Spleen (tissue), 13 donors: ENCODE measurements at regions of chr16 and their contacts with region 1.

Region 1: DNA sequence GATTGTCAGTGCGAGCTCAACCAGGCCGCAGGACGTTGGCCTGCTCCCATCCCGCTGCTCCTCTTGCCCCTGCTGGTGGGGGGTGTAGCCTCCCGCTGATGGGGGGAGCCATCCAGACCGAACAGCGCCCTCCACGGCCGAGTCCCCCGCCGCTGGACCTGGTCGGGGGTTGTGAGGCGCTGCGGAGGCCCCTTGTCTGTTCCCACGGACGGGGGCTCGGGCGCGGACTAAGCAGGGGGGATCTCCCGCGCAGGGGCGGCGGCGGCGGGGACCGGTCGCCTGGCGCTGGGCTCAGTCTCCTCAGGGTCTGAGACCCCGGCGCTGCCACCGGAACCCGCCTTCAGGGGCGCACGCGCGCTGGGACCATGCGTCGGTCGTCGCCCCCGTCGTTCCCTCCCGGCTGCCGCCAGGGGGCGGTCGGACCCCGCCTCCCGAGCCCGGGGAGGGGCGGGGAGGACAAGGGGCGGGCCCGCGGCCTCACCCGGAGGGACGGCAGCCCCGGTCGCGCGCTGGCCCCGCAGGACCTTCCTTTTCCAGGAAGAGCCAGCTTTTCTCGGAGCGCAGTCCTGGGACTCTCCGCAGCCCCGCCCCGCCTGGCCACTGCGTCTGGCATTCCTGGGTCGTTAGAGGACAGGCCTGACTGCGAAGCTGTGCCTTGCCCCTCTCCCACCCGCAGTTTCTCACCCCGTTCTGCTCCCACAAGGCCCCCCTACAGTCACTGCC is 6.3 kb upstream of the IL32 start:
- DNase-seq: peak; percentile 98
- H3K4me3 ChIP-seq: peak overlapping the region; percentile 71 to 97 (median 80)
- H3K27ac ChIP-seq: peak overlapping the region; percentile 86 to 96 (median 90)
- H3K4me1 ChIP-seq: peaks cover 21 to 98% (median 63%) of the 10 kb centered on the region in 6 donors
- H3K27me3 ChIP-seq: no peaks in the 10 kb centered on the region
- CTCF ChIP-seq: peak; percentile 83 to 99 (median 97)
- POLR2A ChIP-seq: peak in 1 of 3 donors; percentile 17

Region 2: GRCh38 chr16:2799866-2800239 is 259.3 kb before region 1 on chr16:
- intact Hi-C with region 1: no loop called
- DNase-seq: peak; percentile 11
- H3K4me3 ChIP-seq: no peak overlapping the region
- H3K27ac ChIP-seq: no peak overlapping the region
- H3K4me1 ChIP-seq: peaks cover 0 to under 1% (median 0%) of the 10 kb centered on the region in 6 donors
- H3K27me3 ChIP-seq: peaks cover 0 to 46% (median 9%) of the 10 kb centered on the region in 7 donors
- CTCF ChIP-seq: no peak
- POLR2A ChIP-seq: no peak

Region 3: DNA sequence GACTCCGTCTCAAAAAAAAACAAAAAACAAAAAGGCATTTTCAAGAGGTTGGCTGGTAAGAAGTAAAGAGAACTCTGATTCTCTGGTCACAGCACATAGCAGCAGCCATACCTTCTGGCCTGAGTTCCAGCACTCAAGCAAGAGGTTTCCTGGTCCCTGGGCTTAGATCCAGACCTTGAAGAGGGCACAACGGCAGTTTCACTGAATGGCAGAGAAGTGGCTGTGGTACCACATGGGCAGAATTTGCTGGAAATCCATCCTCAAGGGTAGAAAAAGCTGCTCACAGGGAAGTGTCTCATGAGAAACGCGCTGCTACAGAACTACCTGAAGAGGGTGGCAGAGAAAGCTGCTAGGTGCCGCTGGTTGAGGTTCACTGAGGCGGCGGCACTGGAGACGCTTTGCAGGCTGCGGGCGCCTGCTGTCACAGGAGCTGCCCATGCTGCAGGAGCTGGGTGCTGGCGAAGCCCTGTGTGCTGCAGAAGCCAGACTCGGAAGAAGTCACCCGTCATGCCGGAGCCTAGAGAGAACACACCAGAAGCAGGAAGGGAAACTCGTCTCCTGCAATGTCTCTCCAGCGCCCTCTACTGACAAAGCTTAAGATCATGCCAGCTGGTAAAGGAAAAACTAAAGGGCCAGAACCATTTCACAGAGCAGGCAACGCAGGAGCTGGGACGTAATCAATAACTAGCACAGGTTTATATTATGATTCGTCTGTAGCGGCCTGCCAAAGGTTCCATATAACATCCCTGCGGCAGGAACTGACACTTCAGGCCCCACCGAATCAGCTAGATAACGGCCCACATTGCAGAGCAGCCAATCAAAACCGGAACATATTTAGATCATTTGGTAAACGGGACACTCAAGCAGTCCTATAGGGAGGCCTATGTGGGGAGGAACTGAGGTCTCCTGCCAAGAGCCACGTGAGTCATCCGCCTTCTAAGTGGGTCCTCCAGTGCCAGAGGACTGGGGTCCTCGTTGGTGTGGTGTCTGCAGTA is 70.3 kb after region 1 on chr16:
- intact Hi-C with region 1: loop called (anchors 5 kb)
- DNase-seq: peak; percentile 91
- H3K4me3 ChIP-seq: peak overlapping the region; percentile 40 to 73 (median 49)
- H3K27ac ChIP-seq: peak overlapping the region; percentile 68 to 90 (median 80)
- H3K4me1 ChIP-seq: peaks cover 30 to 96% (median 60%) of the 10 kb centered on the region in 6 donors
- H3K27me3 ChIP-seq: no peaks in the 10 kb centered on the region
- CTCF ChIP-seq: peak; percentile 72 to 95 (median 90)
- POLR2A ChIP-seq: no peak

Region 4: DNA sequence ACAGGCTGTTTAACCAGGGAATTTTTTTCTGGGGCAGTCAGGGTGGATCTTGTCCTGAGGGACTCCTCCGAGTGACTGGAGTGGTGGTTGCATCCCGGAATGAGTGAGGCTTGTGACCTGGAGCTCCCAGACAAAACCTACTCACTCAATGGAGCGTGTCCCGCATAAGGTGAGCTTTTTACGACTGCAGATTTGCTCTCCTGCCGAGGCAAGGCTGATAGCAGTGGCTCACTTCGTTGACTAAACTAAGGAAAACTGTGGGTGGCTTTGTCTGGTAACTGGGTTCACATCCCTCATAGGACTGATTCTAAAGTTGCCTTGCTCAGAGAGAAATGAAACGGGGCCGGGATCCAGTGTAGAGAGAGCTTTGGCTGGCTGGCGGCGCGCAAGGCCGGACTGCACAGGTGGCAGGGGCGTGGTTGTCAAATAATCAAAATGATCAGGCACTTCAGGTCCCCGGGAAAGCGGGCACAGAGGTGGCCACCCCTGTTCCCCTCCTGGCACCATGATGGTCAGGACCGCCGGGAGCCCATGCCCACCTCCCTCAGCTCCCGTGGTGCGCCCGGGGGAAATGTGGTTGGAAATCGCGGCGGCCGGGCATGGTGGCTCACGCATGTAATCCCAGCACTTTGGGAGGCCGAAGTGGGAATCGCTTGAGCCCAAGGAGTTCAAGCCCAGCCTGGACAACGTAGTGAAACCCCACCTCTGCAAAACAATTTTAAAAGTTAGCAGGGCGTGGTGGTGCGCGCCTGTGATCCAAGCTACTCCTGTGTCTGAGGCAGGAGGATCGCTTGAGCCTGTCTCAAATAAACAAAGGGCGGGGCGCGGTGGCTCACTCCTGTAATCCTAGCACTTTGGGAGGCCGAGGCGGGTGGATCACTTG is 102.2 kb after region 1 on chr16:
- intact Hi-C with region 1: loop called (anchors 10 kb)
- DNase-seq: peak; percentile 72
- H3K4me3 ChIP-seq: no peak overlapping the region
- H3K27ac ChIP-seq: no peak overlapping the region
- H3K4me1 ChIP-seq: peaks cover 0 to 55% (median 32%) of the 10 kb centered on the region in 6 donors
- H3K27me3 ChIP-seq: peaks cover 0 to 34% (median 0%) of the 10 kb centered on the region in 7 donors
- CTCF ChIP-seq: no peak
- POLR2A ChIP-seq: no peak